ENCODE measurements at regions of chr4 and their contacts with region 1.

Region 1: DNA sequence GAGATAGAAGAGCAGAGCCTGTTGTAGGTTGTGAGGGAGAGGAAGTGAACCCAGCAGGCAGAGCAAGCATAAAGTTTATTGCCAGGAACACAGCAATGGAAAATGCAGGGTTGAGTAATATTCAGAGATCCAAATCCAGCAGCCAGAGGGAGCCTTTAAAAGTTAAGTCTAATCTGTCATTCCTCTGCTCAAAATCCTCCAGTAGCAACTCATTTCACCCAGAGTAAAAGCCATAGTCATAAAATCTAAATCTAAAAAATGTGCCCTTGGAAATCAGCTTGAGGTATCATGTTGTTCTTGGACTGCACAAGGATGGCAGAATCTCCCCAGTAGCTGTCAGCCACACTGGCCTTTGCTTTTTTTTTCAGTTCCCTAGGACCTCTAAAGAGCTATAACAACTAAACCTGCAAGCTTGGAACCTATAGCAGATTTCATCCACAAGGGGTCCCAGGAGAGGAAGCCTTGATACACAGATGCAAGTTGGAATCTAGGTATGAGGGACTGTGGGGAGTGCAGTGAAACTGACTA is 62.9 kb upstream of the FRAS1 start:
- DNase-seq: peak; percentile 57
- H3K4me3 ChIP-seq: no peak overlapping the region; a peak in 1 of 4 replicates
- H3K27ac ChIP-seq: peak overlapping the region in 1 of 2 experiments; percentile 53; a peak in 1 of 4 replicates
- H3K4me1 ChIP-seq: peaks cover 0 to 35% of the 10 kb centered on the region in 2 experiments; a peak in 2 of 4 replicates
- H3K27me3 ChIP-seq: no peaks in the 10 kb centered on the region
- CTCF ChIP-seq: peak; percentile 79
- EP300 ChIP-seq: peak in 1 of 2 experiments; percentile 29; a peak in 1 of 4 replicates
- RAD21 ChIP-seq: peak; percentile 71

Region 2: GRCh38 chr4:78517050-78517652 is 522.9 kb after region 1 on chr4:
- CTCF ChIA-PET with region 1: interaction called, 15 read pairs
- POLR2A ChIA-PET with region 1: no interaction called
- DNase-seq: peak; percentile 33
- H3K4me3 ChIP-seq: peak overlapping the region in 1 of 2 experiments; percentile 23; a peak in 1 of 4 replicates
- H3K27ac ChIP-seq: no peak overlapping the region
- H3K4me1 ChIP-seq: no peaks in the 10 kb centered on the region; a peak in 2 of 4 replicates
- H3K27me3 ChIP-seq: no peaks in the 10 kb centered on the region
- CTCF ChIP-seq: peak; percentile 86
- EP300 ChIP-seq: no peak
- RAD21 ChIP-seq: peak; percentile 90